MCF 10A (cell line): ENCODE measurements at regions of chr7 and their contacts with region 1.

Region 1: DNA sequence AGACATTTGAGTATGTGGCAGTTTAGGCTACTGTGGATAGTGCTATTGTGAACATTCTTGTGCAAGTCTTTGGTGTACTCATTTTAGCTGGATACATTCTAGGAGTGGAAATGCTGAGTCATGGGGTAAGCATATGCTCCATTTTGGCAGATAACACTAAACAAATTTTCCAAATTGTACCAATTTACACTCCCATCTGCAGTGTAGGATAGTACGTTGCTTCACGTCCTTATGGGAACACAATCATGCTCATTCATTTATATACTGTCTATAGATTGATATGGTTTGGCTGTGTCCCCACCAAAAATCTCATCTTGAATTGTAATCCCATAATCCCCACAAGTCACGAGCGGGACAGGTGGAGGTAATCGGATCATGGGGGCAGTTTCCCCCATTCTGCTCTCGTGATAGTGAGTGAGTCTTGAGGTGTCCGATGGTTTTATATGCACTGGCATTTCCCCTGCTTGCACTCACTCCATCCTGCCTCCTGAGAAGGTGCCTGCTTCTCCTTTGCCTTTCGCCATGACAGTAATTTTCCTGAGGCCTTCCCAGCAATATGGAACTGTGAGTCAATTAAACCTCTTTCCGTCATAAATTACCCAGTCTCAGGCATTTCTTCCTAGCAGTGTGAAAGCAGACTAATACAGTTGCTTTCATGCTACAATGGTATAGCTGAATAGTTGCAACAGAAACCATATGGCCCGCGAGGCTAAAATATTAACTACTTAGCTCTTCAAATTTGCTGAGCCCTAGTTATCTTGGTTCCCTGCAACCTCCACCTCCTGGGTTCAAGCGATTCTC is 25.6 kb downstream of the RNF216 start:
- DNase-seq: peak; percentile 62
- H3K4me3 Mint-ChIP-seq: no peak overlapping the region
- H3K27ac Mint-ChIP-seq: no peak overlapping the region
- H3K4me1 Mint-ChIP-seq: no peaks in the 10 kb centered on the region
- H3K27me3 Mint-ChIP-seq: no peaks in the 10 kb centered on the region
- CTCF ChIP-seq: no peak

Region 2: DNA sequence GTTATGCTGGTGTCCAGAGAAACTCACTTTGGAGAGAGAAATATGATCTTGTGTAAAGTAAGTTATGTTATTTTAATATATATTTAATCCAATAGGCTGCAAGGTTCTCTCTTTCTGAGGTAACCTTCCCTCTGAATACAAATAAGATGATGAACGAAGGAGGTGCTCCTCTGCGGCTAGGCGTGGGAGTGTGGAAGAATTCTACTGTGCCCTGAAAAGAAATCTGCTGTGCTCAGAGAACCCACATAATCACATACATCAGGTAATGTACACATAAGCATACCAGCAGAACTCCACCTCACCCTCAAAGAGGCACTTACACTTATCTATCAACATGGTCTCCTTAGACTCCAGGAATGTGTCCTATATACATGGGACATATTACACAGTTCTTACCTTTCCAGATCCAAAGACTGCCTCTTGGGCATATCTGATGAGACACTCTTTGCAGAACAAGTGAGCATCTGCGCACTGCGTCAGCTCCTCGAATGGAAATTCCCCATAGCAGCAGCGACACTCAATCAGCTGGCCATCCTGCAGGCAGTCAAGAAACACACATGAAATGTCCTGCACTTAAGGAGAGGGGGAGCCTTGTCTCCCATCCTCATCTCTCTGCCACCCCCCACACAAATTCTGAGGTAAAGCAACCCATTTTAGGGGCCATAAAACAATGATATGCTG is 41.1 kb before region 1 on chr7:
- CTCF ChIA-PET with region 1: no interaction called
- POLR2A ChIA-PET with region 1: no interaction called
- intact Hi-C with region 1: no loop called
- DNase-seq: no peak
- H3K4me3 Mint-ChIP-seq: no peak overlapping the region
- H3K27ac Mint-ChIP-seq: no peak overlapping the region
- H3K4me1 Mint-ChIP-seq: no peaks in the 10 kb centered on the region
- H3K27me3 Mint-ChIP-seq: no peaks in the 10 kb centered on the region
- CTCF ChIP-seq: no peak

Region 3: DNA sequence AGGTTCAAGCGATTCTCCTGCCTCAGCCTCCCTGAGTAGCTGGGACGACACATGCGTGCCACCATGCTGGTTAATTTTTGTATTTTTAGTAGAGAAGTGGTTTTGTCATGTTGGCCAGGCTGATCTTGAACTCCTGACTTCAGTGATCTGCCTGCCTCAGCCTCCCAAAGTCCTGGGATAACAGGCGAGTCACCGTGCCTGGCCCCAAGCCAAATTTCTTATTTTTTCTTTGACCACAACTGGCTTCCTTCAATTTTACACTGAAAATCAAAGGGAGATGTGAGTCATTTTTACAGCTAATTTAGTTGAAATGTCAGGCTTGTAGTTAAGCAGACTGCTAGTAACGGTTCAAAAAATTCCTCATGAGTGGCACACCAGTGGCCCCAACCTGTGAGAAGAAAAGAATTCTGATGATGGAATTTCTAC is 17.8 kb after region 1 on chr7:
- CTCF ChIA-PET with region 1: interaction called, 10 read pairs
- POLR2A ChIA-PET with region 1: no interaction called
- intact Hi-C with region 1: loop called (anchors 2 kb)
- DNase-seq: peak; percentile 89
- H3K4me3 Mint-ChIP-seq: no peak overlapping the region
- H3K27ac Mint-ChIP-seq: peak overlapping the region; percentile 67
- H3K4me1 Mint-ChIP-seq: peaks cover 11% of the 10 kb centered on the region
- H3K27me3 Mint-ChIP-seq: no peaks in the 10 kb centered on the region
- CTCF ChIP-seq: no peak